AG04450 (cell line): ENCODE measurements at regions of chr5 and their contacts with region 1.

Region 1: GRCh38 chr5:159444441-159445082 is 114.3 kb upstream of the IL12B start:
- DNase-seq: peak; percentile 23
- H3K4me3 ChIP-seq: no peak overlapping the region
- H3K27ac ChIP-seq: no peak overlapping the region
- H3K27me3 ChIP-seq: no peaks in the 10 kb centered on the region
- CTCF ChIP-seq: peak; percentile 57

Region 2: DNA sequence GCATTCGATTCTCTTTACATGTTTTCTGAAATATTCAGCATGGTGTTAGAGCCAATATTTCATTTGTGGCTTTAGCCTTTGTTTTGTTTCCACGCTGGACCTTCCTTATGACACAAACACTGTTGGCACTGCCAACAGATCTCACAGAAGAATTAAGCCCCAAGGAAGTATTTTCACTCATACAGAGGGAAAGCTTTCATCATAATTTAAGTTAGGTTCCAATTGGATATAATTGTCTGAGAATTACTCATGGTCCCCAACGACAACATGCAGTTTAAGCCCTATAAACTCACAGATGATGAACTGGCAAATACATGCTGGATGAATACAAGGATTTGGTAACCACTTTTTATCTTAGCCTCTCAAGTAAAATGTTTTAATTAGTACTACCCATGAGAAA is 604.4 kb before region 1 on chr5:
- CTCF ChIA-PET with region 1: no interaction called
- POLR2A ChIA-PET with region 1: no interaction called
- DNase-seq: no peak
- H3K4me3 ChIP-seq: no peak overlapping the region
- H3K27ac ChIP-seq: no peak overlapping the region
- H3K27me3 ChIP-seq: no peaks in the 10 kb centered on the region
- CTCF ChIP-seq: no peak

Region 3: DNA sequence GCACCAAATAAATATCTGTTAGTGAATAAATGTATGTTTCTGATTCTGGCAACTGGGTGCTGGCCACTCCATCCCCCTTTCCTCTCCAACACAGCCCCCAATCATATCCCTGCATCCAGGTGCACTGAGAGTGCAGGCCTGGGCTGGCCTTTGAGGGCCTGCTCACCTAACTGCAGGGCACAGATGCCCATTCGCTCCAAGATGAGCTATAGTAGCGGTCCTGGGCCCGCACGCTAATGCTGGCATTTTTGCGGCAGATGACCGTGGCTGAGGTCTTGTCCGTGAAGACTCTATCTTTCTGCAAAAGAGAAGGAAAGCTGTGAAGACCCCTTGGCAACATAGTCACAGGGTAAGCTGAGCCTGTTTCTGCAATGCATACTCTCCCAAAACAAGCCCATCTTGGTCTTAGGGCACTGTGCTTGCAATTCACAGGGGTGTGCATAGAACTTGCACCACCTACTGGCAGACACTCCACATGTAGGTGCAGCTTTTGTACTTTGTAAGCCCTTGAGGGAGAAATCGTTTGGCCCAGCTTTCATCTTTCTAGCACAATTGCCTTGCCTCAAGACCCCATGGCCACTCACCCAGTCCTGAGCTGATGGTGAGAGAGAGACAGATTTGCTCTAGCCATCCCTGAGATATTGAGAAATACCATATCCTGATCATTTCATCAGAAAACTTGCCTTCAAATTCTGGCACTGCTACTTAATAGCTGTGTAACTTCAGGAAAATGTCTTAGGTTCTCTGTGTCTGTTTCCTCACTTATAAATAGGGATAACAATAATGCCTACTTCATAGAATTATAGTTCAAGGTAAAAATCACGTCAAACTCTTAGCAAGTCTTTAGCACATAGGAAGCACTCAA is 127.8 kb before region 1 on chr5:
- CTCF ChIA-PET with region 1: no interaction called
- POLR2A ChIA-PET with region 1: no interaction called
- DNase-seq: peak; percentile 32
- H3K4me3 ChIP-seq: no peak overlapping the region
- H3K27ac ChIP-seq: no peak overlapping the region
- H3K27me3 ChIP-seq: no peaks in the 10 kb centered on the region
- CTCF ChIP-seq: peak; percentile 78

Region 4: DNA sequence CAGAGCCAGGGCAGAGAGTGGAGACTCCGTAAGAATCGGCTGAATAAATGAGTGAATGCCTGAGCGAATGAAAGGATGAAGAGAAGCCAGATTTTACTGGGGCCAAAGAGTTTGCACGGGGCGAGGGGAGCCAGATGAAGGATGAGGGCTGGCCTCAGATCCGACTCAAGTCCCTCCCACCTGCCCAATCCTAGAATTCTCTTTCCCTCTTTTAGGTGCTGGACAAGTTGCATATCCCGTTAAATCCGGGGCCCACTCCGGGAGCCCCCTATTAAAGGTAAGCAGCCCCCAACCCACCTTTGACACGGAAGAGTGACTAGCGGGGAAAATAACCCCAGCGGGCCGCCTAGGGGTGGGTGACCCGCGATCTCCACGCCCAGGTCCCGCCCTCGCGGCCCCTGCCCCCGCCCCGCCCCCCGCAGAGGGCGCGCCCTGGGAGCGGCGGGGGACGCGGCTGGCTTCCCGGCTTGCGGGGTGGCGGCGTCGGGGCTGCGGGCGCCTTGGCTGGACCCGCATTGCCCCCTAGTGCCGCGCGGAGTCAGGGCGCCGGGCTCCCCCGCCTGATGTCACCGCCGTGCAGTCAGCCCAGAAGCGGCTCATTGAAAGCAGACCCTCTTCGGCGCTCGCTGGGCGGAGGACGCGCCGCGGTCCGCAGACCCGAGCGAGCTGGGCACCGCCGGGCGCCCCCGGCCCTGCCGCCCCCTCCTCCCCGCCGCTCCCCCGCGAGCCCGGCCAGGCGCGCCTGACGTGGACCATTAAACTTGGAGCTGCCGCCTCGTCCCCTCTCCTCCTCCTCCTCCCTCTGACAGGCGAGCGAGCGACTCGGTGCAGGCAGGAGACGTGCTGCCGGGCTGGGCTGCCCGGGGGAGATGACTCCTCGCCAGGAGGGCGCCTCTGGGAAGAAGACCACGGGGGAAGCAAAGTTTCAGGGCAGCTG is 471.6 kb after region 1 on chr5 and contains the start of gene ADRA1B:
- CTCF ChIA-PET with region 1: interaction called, 38 read pairs
- POLR2A ChIA-PET with region 1: no interaction called
- DNase-seq: no peak
- H3K4me3 ChIP-seq: peak within 1 kb of the TSS; percentile 57
- H3K27ac ChIP-seq: no peak within 1 kb of the TSS
- H3K27me3 ChIP-seq: no peaks in the 10 kb centered on the region
- CTCF ChIP-seq: peak; percentile 54
- polyA plus RNA-seq, gene ADRA1B: 0.58 and 0.98 TPM in 2 replicates

Region 5: GRCh38 chr5:159965031-159965837 is 520.7 kb after region 1 on chr5:
- CTCF ChIA-PET with region 1: interaction called, 16 read pairs
- POLR2A ChIA-PET with region 1: no interaction called
- DNase-seq: no peak
- H3K4me3 ChIP-seq: no peak overlapping the region
- H3K27ac ChIP-seq: no peak overlapping the region
- H3K27me3 ChIP-seq: peaks cover 3% of the 10 kb centered on the region
- CTCF ChIP-seq: peak; percentile 75